ENCODE measurements at regions of chr7 and their contacts with region 1.

Region 1: GRCh38 chr7:77759294-77759889 is 38.8 kb downstream of the TMEM60 start:
- DNase-seq: no peak
- ATAC-seq: peak; percentile 55 to 69
- H3K4me3 ChIP-seq: no peak overlapping the region
- H3K27ac ChIP-seq: no peak overlapping the region
- H3K4me1 ChIP-seq: no peaks in the 10 kb centered on the region
- H3K27me3 ChIP-seq: no peaks in the 10 kb centered on the region

Region 2: GRCh38 chr7:77444123-77444522 is 315.3 kb before region 1 on chr7:
- intact Hi-C with region 1: no loop called
- DNase-seq: no peak
- ATAC-seq: no peak
- H3K4me3 ChIP-seq: no peak overlapping the region
- H3K27ac ChIP-seq: no peak overlapping the region
- H3K4me1 ChIP-seq: no peaks in the 10 kb centered on the region
- H3K27me3 ChIP-seq: no peaks in the 10 kb centered on the region

Region 3: GRCh38 chr7:77651573-77652162 is 107.7 kb before region 1 on chr7:
- intact Hi-C with region 1: loop called (anchors 2 to 10 kb)
- DNase-seq: no peak
- ATAC-seq: no peak
- H3K4me3 ChIP-seq: no peak overlapping the region
- H3K27ac ChIP-seq: no peak overlapping the region
- H3K4me1 ChIP-seq: no peaks in the 10 kb centered on the region
- H3K27me3 ChIP-seq: no peaks in the 10 kb centered on the region

Region 4: GRCh38 chr7:77657427-77658224 is 101.8 kb before region 1 on chr7:
- intact Hi-C with region 1: loop called (anchors 2 to 10 kb)
- DNase-seq: no peak
- ATAC-seq: no peak
- H3K4me3 ChIP-seq: no peak overlapping the region
- H3K27ac ChIP-seq: no peak overlapping the region
- H3K4me1 ChIP-seq: no peaks in the 10 kb centered on the region
- H3K27me3 ChIP-seq: no peaks in the 10 kb centered on the region